ENCODE measurements at regions of chr3 and their contacts with region 1.

Region 1: DNA sequence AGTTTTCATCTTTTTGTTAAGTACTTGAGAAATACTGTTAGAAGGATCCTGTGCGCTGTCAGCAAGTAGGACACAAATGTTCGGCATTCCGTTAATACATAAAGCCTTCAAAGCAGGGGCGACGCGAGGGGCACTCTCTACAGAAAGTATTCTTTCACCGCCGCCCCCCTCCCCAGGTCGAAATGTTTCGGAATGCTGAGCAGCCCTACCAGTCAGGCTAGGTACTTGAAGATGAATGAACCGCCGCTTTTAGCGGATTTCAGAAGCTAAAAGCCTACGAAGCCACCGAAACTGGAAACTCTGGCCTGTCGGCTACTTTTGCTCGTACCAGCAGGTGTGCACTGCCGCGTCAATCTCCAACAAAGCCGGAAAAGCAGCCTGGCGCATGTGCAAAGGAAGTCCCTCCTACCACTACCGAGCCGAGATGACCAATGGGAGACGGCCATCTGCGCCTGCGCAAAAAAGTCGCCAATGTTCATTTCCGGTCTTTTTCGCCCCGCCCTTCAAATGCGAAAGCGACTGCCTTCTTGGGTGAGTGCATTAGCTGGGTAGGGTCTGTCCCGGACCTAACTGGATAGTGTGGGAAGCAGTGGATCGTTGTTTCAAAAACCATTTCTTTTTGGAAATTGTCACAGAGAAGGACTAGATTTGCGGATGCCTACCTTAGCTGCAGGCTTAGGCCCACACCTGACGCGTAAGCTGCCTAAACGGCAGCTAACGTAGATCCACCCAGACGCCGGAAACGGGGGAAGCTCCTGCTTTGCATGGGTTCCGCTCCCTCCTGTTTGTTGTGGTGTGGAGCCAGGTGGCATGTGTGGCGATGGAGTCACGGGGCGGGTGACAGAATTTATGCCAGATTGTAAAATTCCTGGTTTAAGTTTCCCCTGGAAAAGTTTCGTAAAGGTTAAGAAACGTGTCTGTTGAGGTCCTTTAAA is at the start of gene WDR5B:
- DNase-seq: peak; percentile 98 to 99 (median 99)
- H3K4me3 ChIP-seq: peak within 1 kb of the TSS; percentile 61 to 63
- H3K4me3 Mint-ChIP-seq: peak within 1 kb of the TSS; percentile 96 to 100 (median 98)
- H3K27ac ChIP-seq: peak within 1 kb of the TSS; percentile 93
- H3K27ac Mint-ChIP-seq: peak within 1 kb of the TSS; percentile 97 to 100 (median 100)
- H3K4me1 ChIP-seq: peaks cover 35% of the 10 kb centered on the region
- H3K4me1 Mint-ChIP-seq: peaks cover 38 to 71% (median 49%) of the 10 kb centered on the region in 4 donors
- H3K27me3 ChIP-seq: no peaks in the 10 kb centered on the region
- H3K27me3 Mint-ChIP-seq: no peaks in the 10 kb centered on the region
- total RNA-seq, gene WDR5B: 19.2 to 19.4 TPM

Region 2: DNA sequence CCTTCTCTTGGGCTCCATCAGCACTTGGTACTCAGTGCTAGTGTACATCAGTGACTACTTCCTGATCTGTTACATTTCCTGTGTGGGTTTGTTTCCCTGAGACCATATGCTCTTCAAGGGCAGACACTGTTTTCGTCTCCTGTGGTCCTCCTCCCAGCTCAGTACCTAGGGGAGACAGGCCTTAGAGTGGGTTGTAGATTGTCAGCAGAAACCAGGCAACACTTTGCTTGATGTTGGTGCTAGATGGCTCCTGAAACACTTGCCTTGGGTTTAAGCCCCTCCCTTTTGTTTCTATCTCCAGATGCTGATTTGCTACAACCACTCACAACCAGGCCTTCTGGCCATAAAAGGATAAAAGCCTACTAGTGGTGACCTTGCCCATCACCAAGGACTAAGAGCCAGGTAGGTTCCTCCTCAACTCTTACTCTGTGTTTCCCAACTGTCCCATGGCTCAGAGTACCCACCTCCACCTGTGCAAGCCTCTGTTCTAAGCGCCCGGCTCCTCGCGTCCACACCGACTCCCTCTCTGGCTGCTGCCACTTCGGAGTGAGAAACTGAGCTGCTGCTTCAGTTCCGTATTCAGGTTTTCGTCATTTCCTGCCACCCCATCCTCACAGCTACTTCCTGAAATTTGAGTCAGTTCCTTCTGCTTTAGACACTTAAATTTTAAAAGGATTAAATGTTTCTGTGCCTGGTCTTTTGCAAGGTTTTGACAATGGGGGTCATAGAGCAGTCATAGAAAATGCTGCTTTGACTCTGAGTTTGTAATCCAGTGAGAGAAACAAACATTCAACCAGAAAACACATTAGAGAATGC is 755.4 kb before region 1 on chr3 and contains the start of gene HCLS1:
- CTCF ChIA-PET with region 1: no interaction called
- POLR2A ChIA-PET with region 1: no interaction called
- intact Hi-C with region 1: loop called (anchors 1 kb)
- DNase-seq: peak; percentile 80 to 86 (median 83)
- H3K4me3 ChIP-seq: peak within 1 kb of the TSS; percentile 58 to 76
- H3K4me3 Mint-ChIP-seq: peak within 1 kb of the TSS; percentile 91 to 99 (median 94)
- H3K27ac ChIP-seq: peak within 1 kb of the TSS; percentile 85
- H3K27ac Mint-ChIP-seq: peak within 1 kb of the TSS; percentile 95 to 100 (median 99)
- H3K4me1 ChIP-seq: peaks cover 42% of the 10 kb centered on the region
- H3K4me1 Mint-ChIP-seq: peaks cover 36 to 62% (median 50%) of the 10 kb centered on the region in 4 donors
- H3K27me3 ChIP-seq: no peaks in the 10 kb centered on the region
- H3K27me3 Mint-ChIP-seq: no peaks in the 10 kb centered on the region
- total RNA-seq, gene HCLS1: 336 TPM

Region 3: DNA sequence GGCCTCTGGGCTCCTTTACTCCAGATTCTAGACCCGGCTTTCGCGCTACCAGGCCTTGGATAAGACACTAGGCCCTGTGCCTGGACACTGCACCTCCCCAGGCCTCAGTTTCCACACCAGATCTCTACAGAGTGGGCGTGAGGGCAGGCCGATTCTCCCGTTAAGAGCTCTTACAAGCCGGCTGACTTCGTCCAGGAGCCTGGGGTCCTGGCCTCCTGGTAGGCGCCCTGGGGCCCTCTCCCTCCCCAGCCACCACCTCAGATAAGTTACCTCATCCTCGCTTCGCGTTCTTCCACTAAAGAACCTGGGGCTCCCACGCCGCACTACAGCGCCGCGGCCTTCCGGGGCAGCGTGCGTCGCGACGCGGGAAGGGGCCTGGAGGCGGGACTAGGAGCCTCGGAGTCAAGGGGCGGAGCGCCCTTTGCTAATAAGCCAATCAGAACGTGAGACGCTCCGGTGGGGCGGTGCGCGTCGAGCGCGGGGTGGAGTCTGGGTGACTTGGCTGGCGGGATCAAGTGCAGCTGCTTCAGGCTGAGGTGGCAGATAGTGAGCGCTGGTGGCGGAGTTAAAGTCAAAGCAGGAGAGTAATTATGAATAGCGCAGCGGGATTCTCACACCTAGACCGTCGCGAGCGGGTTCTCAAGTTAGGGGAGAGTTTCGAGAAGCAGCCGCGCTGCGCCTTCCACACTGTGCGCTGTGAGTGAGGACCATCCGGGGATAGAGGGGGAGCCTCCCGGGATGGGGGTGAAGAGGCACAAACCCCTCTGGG is 581.1 kb before region 1 on chr3 and contains the starts of genes EAF2 and IQCB1:
- CTCF ChIA-PET with region 1: no interaction called
- POLR2A ChIA-PET with region 1: interaction called, 4 read pairs
- intact Hi-C with region 1: loop called (anchors 1 kb)
- DNase-seq: peak; percentile 97 to 98 (median 97)
- H3K4me3 ChIP-seq: peak within 1 kb of the TSS; percentile 83 to 96
- H3K4me3 Mint-ChIP-seq: peak within 1 kb of the TSS; percentile 92 to 98 (median 94)
- H3K27ac ChIP-seq: peak within 1 kb of the TSS; percentile 84
- H3K27ac Mint-ChIP-seq: peak within 1 kb of the TSS; percentile 77 to 98 (median 94)
- H3K4me1 ChIP-seq: peaks cover 30% of the 10 kb centered on the region
- H3K4me1 Mint-ChIP-seq: peaks cover 32 to 54% (median 44%) of the 10 kb centered on the region in 4 donors
- H3K27me3 ChIP-seq: no peaks in the 10 kb centered on the region
- H3K27me3 Mint-ChIP-seq: no peaks in the 10 kb centered on the region
- total RNA-seq, gene EAF2: 5.7 to 6.3 TPM
- total RNA-seq, gene IQCB1: 37.9 to 38.2 TPM

Region 4: DNA sequence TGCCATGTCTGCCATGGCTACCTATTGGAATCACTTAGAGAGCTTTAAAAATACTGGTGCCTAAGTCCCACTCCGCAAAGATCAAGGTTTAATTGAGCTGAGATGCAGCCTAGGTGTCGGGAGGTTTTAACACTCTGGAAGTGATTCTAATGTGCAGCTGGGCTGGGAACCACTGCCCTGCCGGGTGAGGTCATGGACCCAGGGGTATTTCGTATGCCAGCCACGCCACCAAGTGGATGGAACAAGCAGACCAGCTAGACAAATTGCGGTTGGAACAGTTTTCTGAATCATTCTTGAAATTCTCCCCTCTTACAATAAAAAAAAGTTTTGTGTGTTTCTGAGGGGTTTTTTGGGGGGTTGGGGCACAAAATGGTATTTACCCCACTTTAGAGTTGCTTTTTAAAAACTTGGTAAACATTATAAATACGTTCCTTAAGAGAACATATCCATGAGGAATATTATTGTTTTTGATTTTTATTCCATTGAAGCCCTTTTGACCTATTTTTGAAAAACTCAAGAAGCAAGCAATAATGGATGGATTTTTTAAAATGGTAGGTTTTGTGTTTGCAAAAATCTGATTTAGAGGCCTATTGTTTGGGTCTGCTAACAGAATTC is 157.1 kb before region 1 on chr3:
- CTCF ChIA-PET with region 1: no interaction called
- POLR2A ChIA-PET with region 1: no interaction called
- intact Hi-C with region 1: no loop called
- DNase-seq: peak; percentile 9 to 53 (median 32)
- H3K4me3 ChIP-seq: no peak overlapping the region
- H3K4me3 Mint-ChIP-seq: no peak overlapping the region
- H3K27ac ChIP-seq: no peak overlapping the region
- H3K27ac Mint-ChIP-seq: no peak overlapping the region
- H3K4me1 ChIP-seq: peaks cover 5% of the 10 kb centered on the region
- H3K4me1 Mint-ChIP-seq: peaks cover 0 to 11% (median 5%) of the 10 kb centered on the region in 4 donors
- H3K27me3 ChIP-seq: no peaks in the 10 kb centered on the region
- H3K27me3 Mint-ChIP-seq: peaks cover 0 to 5% of the 10 kb centered on the region in 2 donors

Region 5: GRCh38 chr3:122392868-122393844 is 22.8 kb before region 1 on chr3:
- CTCF ChIA-PET with region 1: interaction called, 6 read pairs
- POLR2A ChIA-PET with region 1: interaction called, 13 read pairs
- intact Hi-C with region 1: loop called (anchors 2 kb)
- DNase-seq: peak; percentile 40 to 55 (median 47)
- H3K4me3 ChIP-seq: no peak overlapping the region
- H3K4me3 Mint-ChIP-seq: no peak overlapping the region
- H3K27ac ChIP-seq: no peak overlapping the region
- H3K27ac Mint-ChIP-seq: peak overlapping the region in 1 of 7 donors; percentile 48
- H3K4me1 ChIP-seq: no peaks in the 10 kb centered on the region
- H3K4me1 Mint-ChIP-seq: peaks cover 4 to 7% (median 5%) of the 10 kb centered on the region in 4 donors
- H3K27me3 ChIP-seq: no peaks in the 10 kb centered on the region
- H3K27me3 Mint-ChIP-seq: no peaks in the 10 kb centered on the region

Region 6: GRCh38 chr3:122514123-122515019 is 98.4 kb after region 1 on chr3 and contains the start of gene KPNA1:
- CTCF ChIA-PET with region 1: no interaction called
- POLR2A ChIA-PET with region 1: interaction called, 43 read pairs
- intact Hi-C with region 1: loop called (anchors 1 kb)
- DNase-seq: peak; percentile 86 to 92 (median 90)
- H3K4me3 ChIP-seq: peak within 1 kb of the TSS; percentile 58 to 71
- H3K4me3 Mint-ChIP-seq: peak within 1 kb of the TSS; percentile 90 to 95 (median 93)
- H3K27ac ChIP-seq: peak within 1 kb of the TSS; percentile 97
- H3K27ac Mint-ChIP-seq: peak within 1 kb of the TSS; percentile 91 to 98 (median 96)
- H3K4me1 ChIP-seq: peaks cover 30% of the 10 kb centered on the region
- H3K4me1 Mint-ChIP-seq: peaks cover 24 to 51% (median 36%) of the 10 kb centered on the region in 4 donors
- H3K27me3 ChIP-seq: no peaks in the 10 kb centered on the region
- H3K27me3 Mint-ChIP-seq: no peaks in the 10 kb centered on the region
- total RNA-seq, gene KPNA1: 67.4 to 71.5 TPM

Region 7: DNA sequence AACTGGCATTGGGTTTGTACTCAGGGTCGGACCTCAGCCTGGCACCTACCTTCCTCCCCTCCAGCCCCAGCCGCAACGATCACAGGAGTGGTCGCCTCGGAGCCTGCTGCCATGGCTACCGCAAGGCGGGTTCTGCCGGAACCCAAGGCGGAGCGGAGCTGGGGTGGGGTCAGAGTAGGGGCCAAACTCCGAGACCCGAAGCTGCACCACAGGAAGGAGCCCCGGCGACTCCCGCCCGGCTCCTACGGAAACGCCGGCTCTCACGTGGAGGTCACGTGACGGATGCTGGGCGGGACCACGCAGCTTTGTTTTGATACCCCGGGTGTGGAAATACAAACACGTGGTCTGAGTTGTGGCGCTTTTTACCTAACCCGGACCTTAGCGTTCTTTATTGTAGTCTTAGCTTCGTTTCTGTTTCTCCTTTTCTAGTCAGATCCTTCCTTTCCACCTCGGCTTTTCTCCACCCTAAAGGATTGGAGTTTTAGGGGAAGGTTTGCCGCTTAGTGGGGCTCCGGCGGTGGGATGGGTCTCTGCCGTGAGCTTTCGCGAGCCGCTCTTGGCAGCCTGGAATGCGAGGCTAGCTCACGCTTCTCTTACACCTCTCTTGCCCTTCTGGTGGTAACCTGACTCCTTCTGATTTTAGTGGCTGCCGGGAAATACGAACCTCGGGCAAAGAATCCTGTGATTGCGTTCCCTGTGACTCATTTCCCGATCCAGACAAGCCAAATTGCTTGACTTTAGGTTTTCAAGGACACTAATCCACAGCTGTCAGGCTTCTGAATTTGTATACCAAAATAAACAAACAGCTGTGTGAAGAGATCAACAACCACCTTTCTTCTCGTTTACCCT is 377.8 kb after region 1 on chr3 and contains the start of gene HSPBAP1:
- CTCF ChIA-PET with region 1: no interaction called
- POLR2A ChIA-PET with region 1: interaction called, 12 read pairs
- intact Hi-C with region 1: loop called (anchors 5 kb)
- DNase-seq: peak; percentile 85 to 91 (median 87)
- H3K4me3 ChIP-seq: peak within 1 kb of the TSS; percentile 78 to 83
- H3K4me3 Mint-ChIP-seq: peak within 1 kb of the TSS in 6 of 8 donors; percentile 91 to 97 (median 94)
- H3K27ac ChIP-seq: peak within 1 kb of the TSS; percentile 74
- H3K27ac Mint-ChIP-seq: peak within 1 kb of the TSS in 5 of 7 donors; percentile 95 to 98 (median 97)
- H3K4me1 ChIP-seq: peaks cover 54% of the 10 kb centered on the region
- H3K4me1 Mint-ChIP-seq: peaks cover 25 to 32% (median 29%) of the 10 kb centered on the region in 4 donors
- H3K27me3 ChIP-seq: no peaks in the 10 kb centered on the region
- H3K27me3 Mint-ChIP-seq: no peaks in the 10 kb centered on the region
- total RNA-seq, gene HSPBAP1: 22.9 to 23.2 TPM

Region 8: DNA sequence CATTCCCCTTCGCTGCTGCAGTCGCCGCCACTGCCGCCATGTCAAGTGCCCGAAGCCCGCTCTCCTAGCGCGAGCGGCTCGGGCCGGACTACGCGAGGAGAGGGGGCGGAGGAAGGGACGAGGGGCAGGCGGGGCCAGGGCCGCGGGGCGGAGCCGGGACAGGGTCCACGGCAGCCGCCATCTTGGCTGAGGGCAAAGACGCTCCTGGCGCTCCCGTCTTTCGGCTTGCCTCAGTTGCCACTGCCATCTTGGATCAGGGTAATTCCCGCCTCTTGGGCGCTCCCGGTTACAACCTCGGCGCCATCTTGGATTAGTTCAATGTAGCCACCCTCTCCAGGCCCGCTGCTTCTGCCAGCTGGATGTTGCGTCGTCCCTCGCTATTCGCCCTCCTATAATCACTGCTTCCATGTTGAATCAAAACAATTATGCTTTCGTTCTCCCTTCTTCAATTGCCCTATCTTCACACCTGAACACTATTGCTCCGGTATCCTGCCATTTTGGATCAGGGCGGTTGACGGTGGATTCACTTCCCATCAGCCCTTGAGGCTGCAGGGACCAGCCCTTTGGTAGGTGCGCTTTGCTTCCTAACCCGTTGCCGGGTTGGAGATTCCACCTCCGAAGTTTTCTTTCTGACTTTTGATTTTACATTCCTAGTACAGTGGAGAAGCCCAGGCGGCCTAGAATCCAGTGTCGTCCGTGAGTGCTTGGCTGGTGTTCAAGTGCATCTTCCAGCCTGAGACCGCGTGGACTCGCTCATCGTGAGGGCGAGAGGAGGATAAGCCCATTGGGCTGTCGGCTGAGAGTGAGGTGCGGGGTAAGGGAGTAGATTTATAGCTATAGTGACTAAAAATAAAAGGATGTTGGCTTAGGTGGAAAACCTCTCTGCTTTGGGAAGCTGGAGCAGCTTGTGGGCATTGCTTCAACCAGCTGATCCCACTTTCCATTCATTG is 1169.3 kb after region 1 on chr3 and contains the start of gene HACD2:
- CTCF ChIA-PET with region 1: no interaction called
- POLR2A ChIA-PET with region 1: no interaction called
- intact Hi-C with region 1: loop called (anchors 10 kb)
- DNase-seq: peak; percentile 90 to 96 (median 92)
- H3K4me3 ChIP-seq: peak within 1 kb of the TSS; percentile 80 to 99
- H3K4me3 Mint-ChIP-seq: peak within 1 kb of the TSS in 5 of 8 donors; percentile 88 to 93 (median 92)
- H3K27ac ChIP-seq: peak within 1 kb of the TSS; percentile 78
- H3K27ac Mint-ChIP-seq: peak within 1 kb of the TSS in 6 of 7 donors; percentile 76 to 94 (median 87)
- H3K4me1 ChIP-seq: peaks cover 38% of the 10 kb centered on the region
- H3K4me1 Mint-ChIP-seq: peaks cover 20 to 28% (median 22%) of the 10 kb centered on the region in 4 donors
- H3K27me3 ChIP-seq: no peaks in the 10 kb centered on the region
- H3K27me3 Mint-ChIP-seq: no peaks in the 10 kb centered on the region
- total RNA-seq, gene HACD2: 26.0 to 29.5 TPM